ENCODE measurements at regions of chr3 and their contacts with region 1.

Region 1: DNA sequence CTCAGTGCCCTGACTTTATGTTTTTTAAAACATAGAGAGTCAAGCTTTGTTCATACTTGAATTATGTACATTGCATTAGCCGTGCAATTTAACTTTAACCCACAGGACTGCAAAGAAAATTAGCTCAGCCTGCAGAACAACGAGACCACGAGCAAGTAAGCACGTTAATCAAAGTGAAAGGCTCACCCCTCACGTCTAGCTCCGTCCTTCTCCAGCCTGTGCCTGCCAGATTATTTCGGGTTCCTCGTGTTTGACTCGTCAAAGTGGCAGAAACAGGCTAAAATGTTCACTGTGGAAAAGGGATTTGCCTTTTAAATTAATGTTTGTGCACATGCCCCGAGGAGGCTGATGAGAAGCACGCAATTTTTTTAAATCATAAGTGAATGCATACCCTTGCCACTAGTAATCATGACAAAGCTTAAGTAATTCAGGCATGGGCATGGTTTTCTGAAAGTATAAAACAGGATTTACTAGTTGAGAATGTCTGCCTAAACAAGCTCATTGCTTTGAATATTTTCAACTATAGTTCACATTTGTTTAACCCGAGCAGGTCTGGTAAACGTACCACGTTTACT is 15.3 kb downstream of the ZBTB38 start:
- DNase-seq: peak in 1 of 10 donors; percentile 31
- H3K4me3 ChIP-seq: peak overlapping the region in 58 of 59 donors; percentile 13 to 73 (median 59)
- H3K27ac ChIP-seq: peak overlapping the region in 58 of 59 donors; percentile 10 to 96 (median 88)
- H3K27me3 ChIP-seq: no peaks in the 10 kb centered on the region
- CTCF ChIP-seq: peak in 1 of 56 donors; percentile 9

Region 2: DNA sequence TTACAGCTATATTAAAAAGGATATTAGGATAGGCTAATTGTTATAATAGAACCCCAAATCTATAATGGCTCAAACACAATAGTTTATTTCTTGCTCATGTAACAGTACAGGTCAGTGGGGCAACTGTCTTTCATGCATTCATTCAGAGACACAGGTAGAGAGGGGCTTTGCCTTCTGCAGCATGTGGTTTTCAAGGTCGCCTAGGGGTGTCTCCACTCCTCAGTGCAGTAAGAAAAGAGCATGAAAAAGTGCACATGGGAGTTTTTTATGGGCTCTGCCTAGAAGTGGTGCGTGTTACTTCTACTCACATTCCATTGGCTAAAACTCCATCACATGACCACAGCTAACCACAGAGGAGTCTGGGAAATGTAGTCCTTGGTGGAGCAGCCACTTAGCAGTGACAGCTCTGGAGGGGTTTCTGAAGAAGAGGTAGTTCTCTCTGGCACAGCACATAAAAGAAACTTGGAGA is 13.5 kb before region 1 on chr3:
- intact Hi-C with region 1: loop called in 1 of 2 experiments (anchors 2 kb)
- DNase-seq: peak in 3 of 10 donors; percentile 31 to 76 (median 53)
- H3K4me3 ChIP-seq: peak overlapping the region in 39 of 59 donors; percentile 5 to 68 (median 49)
- H3K27ac ChIP-seq: peak overlapping the region in 57 of 59 donors; percentile 38 to 99 (median 96)
- H3K27me3 ChIP-seq: no peaks in the 10 kb centered on the region
- CTCF ChIP-seq: peak in 51 of 56 donors; percentile 15 to 64 (median 45)

Region 3: DNA sequence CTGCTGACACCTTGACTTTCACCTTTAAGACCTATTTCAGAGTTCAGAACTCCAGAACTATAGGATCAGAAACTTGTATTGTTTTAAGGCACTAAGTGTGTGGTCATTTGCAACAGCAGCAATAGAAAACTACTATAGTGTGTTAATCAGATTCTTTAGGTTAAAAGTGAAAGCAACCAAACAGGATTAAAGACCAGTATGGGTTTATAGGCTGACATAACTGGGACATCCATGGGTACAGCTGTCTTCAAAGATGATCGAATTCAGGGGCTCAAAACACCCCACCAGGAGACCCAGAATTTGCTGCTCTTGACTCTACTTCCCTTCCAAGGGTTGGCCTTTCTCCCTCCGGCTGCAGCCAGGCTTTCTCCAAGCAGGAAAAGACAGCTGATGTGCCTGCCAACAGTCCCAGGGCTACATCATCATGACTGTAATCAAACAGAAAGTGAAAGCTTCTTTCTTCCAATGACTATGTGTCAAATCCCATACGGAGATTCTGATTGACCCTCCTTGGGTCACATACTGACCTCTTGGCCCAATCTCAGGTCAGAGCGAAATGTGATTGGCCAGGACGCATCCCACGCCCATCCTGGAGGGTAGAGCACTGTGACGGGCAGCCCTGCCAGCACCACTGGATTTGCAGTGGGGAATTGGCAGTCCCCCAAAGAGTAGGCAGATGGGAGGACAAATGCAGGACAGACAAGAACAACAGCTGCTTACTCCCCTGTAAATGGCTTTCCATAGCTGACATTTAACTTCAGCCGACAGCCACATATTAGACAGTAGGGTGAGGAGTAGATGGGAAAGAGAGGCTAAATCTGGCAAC is 303.0 kb after region 1 on chr3:
- intact Hi-C with region 1: no loop called
- DNase-seq: peak; percentile 20 to 88 (median 71)
- H3K4me3 ChIP-seq: peak overlapping the region; percentile 7 to 68 (median 44)
- H3K27ac ChIP-seq: peak overlapping the region in 57 of 59 donors; percentile 11 to 91 (median 73)
- H3K27me3 ChIP-seq: no peaks in the 10 kb centered on the region
- CTCF ChIP-seq: peak in 2 of 56 donors; percentile 12 to 21